GM12878 (cell line): ENCODE measurements at regions of chr13 and their contacts with region 1.

Region 1: GRCh38 chr13:105740739-105741138 is 794.7 kb downstream of the EFNB2 start:
- DNase-seq: no peak
- ATAC-seq: no peak
- H3K4me3 ChIP-seq: no peak overlapping the region
- H3K27ac ChIP-seq: no peak overlapping the region
- H3K4me1 ChIP-seq: no peaks in the 10 kb centered on the region
- H3K27me3 ChIP-seq: no peaks in the 10 kb centered on the region
- CTCF ChIP-seq: no peak
- EP300 ChIP-seq: no peak
- POLR2A ChIP-seq: no peak
- RAD21 ChIP-seq: no peak

Region 2: GRCh38 chr13:105153611-105154010 is 587.1 kb before region 1 on chr13:
- CTCF ChIA-PET with region 1: no interaction called
- POLR2A ChIA-PET with region 1: no interaction called
- RAD21 ChIA-PET with region 1: no interaction called
- SMC1A ChIA-PET with region 1: no interaction called
- in situ Hi-C with region 1: no loop called
- intact Hi-C with region 1: no loop called
- DNase-seq: no peak
- ATAC-seq: no peak
- H3K4me3 ChIP-seq: no peak overlapping the region
- H3K27ac ChIP-seq: no peak overlapping the region
- H3K4me1 ChIP-seq: no peaks in the 10 kb centered on the region
- H3K27me3 ChIP-seq: no peaks in the 10 kb centered on the region
- CTCF ChIP-seq: no peak
- EP300 ChIP-seq: no peak
- POLR2A ChIP-seq: no peak
- RAD21 ChIP-seq: no peak

Region 3: DNA sequence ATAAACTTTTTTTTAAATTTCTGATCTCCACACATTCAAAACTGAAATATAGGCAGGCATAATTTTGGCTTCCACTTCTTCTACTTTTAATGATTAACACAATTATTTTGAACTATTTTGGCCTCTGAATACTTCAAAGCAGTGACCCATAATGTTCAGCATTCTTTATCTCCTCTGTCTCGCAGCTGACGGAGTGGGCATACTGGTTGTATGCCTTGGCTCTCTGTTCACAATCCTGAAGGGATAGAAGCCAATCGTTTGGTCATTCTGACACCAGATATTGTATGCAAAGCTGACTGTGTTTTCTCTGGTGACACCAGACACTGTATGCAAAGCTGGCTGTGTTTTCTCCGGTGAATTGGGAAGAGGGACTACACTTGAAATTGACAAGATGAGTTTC is 38.3 kb before region 1 on chr13:
- CTCF ChIA-PET with region 1: no interaction called
- POLR2A ChIA-PET with region 1: no interaction called
- RAD21 ChIA-PET with region 1: no interaction called
- SMC1A ChIA-PET with region 1: no interaction called
- in situ Hi-C with region 1: no loop called
- intact Hi-C with region 1: loop called (anchors 5 kb)
- DNase-seq: no peak
- ATAC-seq: no peak
- H3K4me3 ChIP-seq: no peak overlapping the region
- H3K27ac ChIP-seq: no peak overlapping the region
- H3K4me1 ChIP-seq: no peaks in the 10 kb centered on the region
- H3K27me3 ChIP-seq: no peaks in the 10 kb centered on the region
- CTCF ChIP-seq: no peak
- EP300 ChIP-seq: no peak
- POLR2A ChIP-seq: no peak
- RAD21 ChIP-seq: no peak

Region 4: GRCh38 chr13:105918842-105919741 is 178.4 kb after region 1 on chr13:
- CTCF ChIA-PET with region 1: no interaction called
- POLR2A ChIA-PET with region 1: no interaction called
- RAD21 ChIA-PET with region 1: no interaction called
- SMC1A ChIA-PET with region 1: no interaction called
- in situ Hi-C with region 1: no loop called
- intact Hi-C with region 1: no loop called
- DNase-seq: no peak
- ATAC-seq: no peak
- H3K4me3 ChIP-seq: no peak overlapping the region
- H3K27ac ChIP-seq: no peak overlapping the region
- H3K4me1 ChIP-seq: no peaks in the 10 kb centered on the region
- H3K27me3 ChIP-seq: no peaks in the 10 kb centered on the region
- CTCF ChIP-seq: no peak
- EP300 ChIP-seq: no peak
- POLR2A ChIP-seq: no peak
- RAD21 ChIP-seq: no peak